ENCODE measurements at regions of chr17 and their contacts with region 1.

Region 1: GRCh38 chr17:80195731-80196529 is 24.2 kb downstream of the SGSH start:
- DNase-seq: peak; percentile 52
- H3K4me3 Mint-ChIP-seq: no peak overlapping the region
- H3K27ac Mint-ChIP-seq: no peak overlapping the region
- H3K4me1 Mint-ChIP-seq: no peaks in the 10 kb centered on the region
- H3K27me3 Mint-ChIP-seq: peaks cover 5% of the 10 kb centered on the region

Region 2: GRCh38 chr17:80254396-80255251 is 58.7 kb after region 1 on chr17:
- CTCF ChIA-PET with region 1: interaction called, 11 read pairs
- POLR2A ChIA-PET with region 1: no interaction called
- DNase-seq: peak; percentile 78
- H3K4me3 Mint-ChIP-seq: peak overlapping the region; percentile 39
- H3K27ac Mint-ChIP-seq: peak overlapping the region; percentile 88
- H3K4me1 Mint-ChIP-seq: peaks cover 73% of the 10 kb centered on the region
- H3K27me3 Mint-ChIP-seq: no peaks in the 10 kb centered on the region

Region 3: DNA sequence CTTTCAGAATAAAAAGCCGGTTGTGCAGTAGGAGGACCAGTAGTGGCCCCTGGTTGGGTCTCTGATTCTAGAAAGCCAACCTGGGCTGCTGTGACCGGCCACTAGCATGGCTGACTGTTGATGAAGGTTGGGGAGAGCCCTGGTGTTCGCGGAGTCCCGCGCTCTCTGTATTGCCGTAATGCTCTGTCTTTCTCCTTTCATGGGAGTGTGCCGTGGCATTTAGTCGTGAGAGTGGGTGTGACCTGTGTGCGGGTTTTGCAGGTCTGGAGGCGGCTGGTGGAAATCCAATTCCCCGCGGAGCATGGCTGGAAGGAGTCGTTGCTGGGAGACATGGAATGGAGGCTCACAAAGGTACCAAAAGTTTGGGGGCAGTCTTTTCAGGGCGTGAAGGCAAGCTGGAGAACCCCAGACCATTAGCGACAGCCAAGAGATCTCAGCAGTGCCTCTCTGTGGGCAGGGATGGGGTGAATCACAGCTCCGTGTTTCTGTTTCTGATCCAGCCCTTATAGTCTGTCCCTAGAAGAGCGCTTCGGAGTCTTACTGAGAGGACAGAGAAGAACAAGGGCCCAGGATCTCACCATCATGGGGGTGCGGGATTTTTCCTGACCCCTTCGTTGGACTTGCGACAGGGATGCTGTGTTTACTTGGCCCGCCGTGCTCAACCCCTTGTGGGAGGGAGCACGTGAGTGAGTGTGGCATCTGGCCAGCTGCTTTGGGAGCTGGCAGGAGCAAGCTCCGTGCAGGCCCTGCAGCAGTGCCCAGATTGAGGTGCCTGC is 121.2 kb after region 1 on chr17:
- CTCF ChIA-PET with region 1: no interaction called
- POLR2A ChIA-PET with region 1: no interaction called
- DNase-seq: no peak
- H3K4me3 Mint-ChIP-seq: no peak overlapping the region
- H3K27ac Mint-ChIP-seq: no peak overlapping the region
- H3K4me1 Mint-ChIP-seq: peaks cover under 1% of the 10 kb centered on the region
- H3K27me3 Mint-ChIP-seq: no peaks in the 10 kb centered on the region

Measured in activated CD4-positive, alpha-beta T cell treated with anti-CD3 and anti-CD28 coated beads, Interleukin-2, amount 10 ng/mL, durations not matched to agents 7 days and 5 days (primary cell).